MCF 10A (cell line): ENCODE measurements at regions of chr3 and their contacts with region 1.

Region 1: GRCh38 chr3:152268555-152269425 is at the start of gene MBNL1:
- DNase-seq: peak; percentile 81
- H3K4me3 Mint-ChIP-seq: peak within 1 kb of the TSS; percentile 90
- H3K27ac Mint-ChIP-seq: peak within 1 kb of the TSS; percentile 80
- H3K4me1 Mint-ChIP-seq: peaks cover 42% of the 10 kb centered on the region
- H3K27me3 Mint-ChIP-seq: no peaks in the 10 kb centered on the region
- CTCF ChIP-seq: no peak
- total RNA-seq, gene MBNL1: 114 and 139 TPM in 2 replicates

Region 2: DNA sequence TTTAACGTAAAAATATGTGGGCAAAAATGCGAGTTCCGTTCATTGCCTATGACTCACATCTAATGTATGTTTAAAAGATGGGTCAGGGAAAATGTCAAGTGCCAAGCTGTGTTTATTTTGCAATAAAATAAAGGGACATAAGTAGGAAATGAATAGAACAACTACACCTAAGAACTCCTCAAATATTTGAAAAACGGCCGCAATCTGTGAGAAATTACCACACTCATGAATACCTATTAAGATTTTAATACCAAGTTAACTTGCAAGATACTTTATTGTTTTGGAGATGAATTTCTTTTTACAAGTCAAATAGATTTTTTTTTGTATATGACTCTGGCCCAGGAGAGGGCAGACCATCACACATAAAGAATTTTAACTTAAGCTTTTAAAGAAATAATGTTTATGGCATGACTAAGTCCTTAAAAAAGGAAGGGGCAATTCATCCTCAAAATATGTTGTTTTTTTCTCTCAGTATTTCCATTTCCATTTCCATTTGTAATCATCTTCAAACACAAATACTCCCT is 242.7 kb before region 1 on chr3:
- CTCF ChIA-PET with region 1: no interaction called
- POLR2A ChIA-PET with region 1: no interaction called
- intact Hi-C with region 1: loop called (anchors 2 kb)
- DNase-seq: peak; percentile 75
- H3K4me3 Mint-ChIP-seq: no peak overlapping the region
- H3K27ac Mint-ChIP-seq: no peak overlapping the region
- H3K4me1 Mint-ChIP-seq: peaks cover 38% of the 10 kb centered on the region
- H3K27me3 Mint-ChIP-seq: no peaks in the 10 kb centered on the region
- CTCF ChIP-seq: peak; percentile 30

Region 3: DNA sequence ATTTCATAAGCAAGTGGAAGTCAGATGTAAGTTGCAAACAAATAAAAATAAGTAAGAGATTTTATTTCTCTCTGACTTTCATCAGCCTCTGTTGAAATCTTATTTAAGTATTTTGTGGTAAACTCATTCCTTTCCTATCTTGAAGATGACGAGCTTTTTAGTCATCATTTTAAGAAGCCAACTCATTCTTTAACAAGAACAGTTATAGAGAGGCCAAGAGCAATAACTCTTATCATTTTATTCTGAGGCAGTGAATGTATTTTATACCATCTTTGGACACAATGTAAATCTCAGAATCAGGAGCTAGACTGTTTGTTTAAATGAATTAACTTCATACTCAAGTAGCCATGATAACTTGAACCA is 147.5 kb before region 1 on chr3:
- CTCF ChIA-PET with region 1: no interaction called
- POLR2A ChIA-PET with region 1: interaction called, 7 read pairs
- intact Hi-C with region 1: loop called (anchors 5 kb)
- DNase-seq: peak; percentile 65
- H3K4me3 Mint-ChIP-seq: no peak overlapping the region
- H3K27ac Mint-ChIP-seq: peak overlapping the region; percentile 82
- H3K4me1 Mint-ChIP-seq: peaks cover 38% of the 10 kb centered on the region
- H3K27me3 Mint-ChIP-seq: no peaks in the 10 kb centered on the region
- CTCF ChIP-seq: no peak

Region 4: GRCh38 chr3:152281133-152281713 is 12.4 kb after region 1 on chr3:
- CTCF ChIA-PET with region 1: interaction called, 3 read pairs
- POLR2A ChIA-PET with region 1: interaction called, 33 read pairs
- intact Hi-C with region 1: no loop called
- DNase-seq: no peak
- H3K4me3 Mint-ChIP-seq: no peak overlapping the region
- H3K27ac Mint-ChIP-seq: no peak overlapping the region
- H3K4me1 Mint-ChIP-seq: peaks cover 39% of the 10 kb centered on the region
- H3K27me3 Mint-ChIP-seq: no peaks in the 10 kb centered on the region
- CTCF ChIP-seq: no peak

Region 5: GRCh38 chr3:152309535-152310307 is 40.9 kb after region 1 on chr3:
- CTCF ChIA-PET with region 1: interaction called, 3 read pairs
- POLR2A ChIA-PET with region 1: interaction called, 27 read pairs
- intact Hi-C with region 1: no loop called
- DNase-seq: peak; percentile 54
- H3K4me3 Mint-ChIP-seq: no peak overlapping the region
- H3K27ac Mint-ChIP-seq: no peak overlapping the region
- H3K4me1 Mint-ChIP-seq: peaks cover 21% of the 10 kb centered on the region
- H3K27me3 Mint-ChIP-seq: no peaks in the 10 kb centered on the region
- CTCF ChIP-seq: no peak

Region 6: DNA sequence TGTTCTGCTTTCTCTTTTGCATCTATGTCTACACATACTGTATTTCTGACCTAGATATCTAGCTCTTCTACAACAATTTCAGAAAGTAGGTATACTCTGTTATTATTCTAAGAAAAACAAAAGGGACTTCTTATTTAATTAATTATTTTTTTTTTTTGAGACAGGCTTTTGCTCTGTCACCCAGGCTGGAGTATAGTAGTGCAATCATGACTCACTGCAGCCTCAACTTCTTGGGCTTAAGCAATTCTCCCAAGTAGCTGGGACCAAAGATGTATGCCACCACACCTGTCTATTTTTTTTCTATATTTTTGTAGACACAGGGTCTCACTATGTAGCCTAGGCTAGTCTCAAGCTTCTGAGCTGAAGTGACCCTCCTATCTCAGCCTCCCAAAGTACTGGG is 130.6 kb after region 1 on chr3:
- CTCF ChIA-PET with region 1: interaction called, 3 read pairs
- POLR2A ChIA-PET with region 1: interaction called, 11 read pairs
- intact Hi-C with region 1: loop called (anchors 10 kb)
- DNase-seq: peak; percentile 86
- H3K4me3 Mint-ChIP-seq: no peak overlapping the region
- H3K27ac Mint-ChIP-seq: no peak overlapping the region
- H3K4me1 Mint-ChIP-seq: peaks cover 48% of the 10 kb centered on the region
- H3K27me3 Mint-ChIP-seq: no peaks in the 10 kb centered on the region
- CTCF ChIP-seq: no peak